ENCODE measurements at regions of chr17 and their contacts with region 1.

Region 1: GRCh38 chr17:42760652-42761581 is at the start of gene RAMP2:
- DNase-seq: no peak
- ATAC-seq: peak; percentile 47
- total RNA-seq, gene RAMP2: 41.3 TPM

Region 2: GRCh38 chr17:42577532-42578281 is 183.2 kb before region 1 on chr17 and contains the start of gene PSMC3IP:
- intact Hi-C with region 1: loop called (anchors 5 kb)
- DNase-seq: peak; percentile 97
- ATAC-seq: peak; percentile 95
- total RNA-seq, gene PSMC3IP: 3.4 TPM

Region 3: DNA sequence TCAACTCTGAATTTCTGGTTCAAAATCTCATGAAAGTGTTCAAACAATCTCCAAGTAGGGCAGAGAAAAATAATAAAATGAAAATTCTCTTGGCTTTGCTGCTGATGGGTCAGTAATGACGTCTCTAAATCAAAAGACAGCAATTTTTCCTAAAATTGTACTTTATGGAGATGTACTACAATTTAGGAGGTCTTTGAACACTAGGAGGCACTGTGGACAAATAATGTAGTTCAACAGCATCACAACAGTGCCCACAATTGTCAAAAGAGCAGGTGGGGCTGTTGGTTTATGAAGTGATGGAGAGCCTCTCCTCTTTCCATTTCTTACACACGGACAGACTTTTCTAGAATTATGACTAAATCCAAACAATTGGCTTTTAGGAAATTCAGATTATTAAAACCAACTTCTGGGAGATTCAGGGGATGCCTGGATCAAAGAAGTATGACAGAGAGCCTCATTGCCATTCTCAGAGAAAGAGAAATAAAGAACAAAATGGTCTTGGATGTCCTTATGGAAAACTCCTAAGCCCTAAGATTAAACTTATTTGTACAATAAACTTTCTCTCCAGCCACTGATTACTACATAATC is 39.8 kb before region 1 on chr17:
- intact Hi-C with region 1: loop called (anchors 1 kb)
- DNase-seq: no peak
- ATAC-seq: peak; percentile 56

Region 4: DNA sequence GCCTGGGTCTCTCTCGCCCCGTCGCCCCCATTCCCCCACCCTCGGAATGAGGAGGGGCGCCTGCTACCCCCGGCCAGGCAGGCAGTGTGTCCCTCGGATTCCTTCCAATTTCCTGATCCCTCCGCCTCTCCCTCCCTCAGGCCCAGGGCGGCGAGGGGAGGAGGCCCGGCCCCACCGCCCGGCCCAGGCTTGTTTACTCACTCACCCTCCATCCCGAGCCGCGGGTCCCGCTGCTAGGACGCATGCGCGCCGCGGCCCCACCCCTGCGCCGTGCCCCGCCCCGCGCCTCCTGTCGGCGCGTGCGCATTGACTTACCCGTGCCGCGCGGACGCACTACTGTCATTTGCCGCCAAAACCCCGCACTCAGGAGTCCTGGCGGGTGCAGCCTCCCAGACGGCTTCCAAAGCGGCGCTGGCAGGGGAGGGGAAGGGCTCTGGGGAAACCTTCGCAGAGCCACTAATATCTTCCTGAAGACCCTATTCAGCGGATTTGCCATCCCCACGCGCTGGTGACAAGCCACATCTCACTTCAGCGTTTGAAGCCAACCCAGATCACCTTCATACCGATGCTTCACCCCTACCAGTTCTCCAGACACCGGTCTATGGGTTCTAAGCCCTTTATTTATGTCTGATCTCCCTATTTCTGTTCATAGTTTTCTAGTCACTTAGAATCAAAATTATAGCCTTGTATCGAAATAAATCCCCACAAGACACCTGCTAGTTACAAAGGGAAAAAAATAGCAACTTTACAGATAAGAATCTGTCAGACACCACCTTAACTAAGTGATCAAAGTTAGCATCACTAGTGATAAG is 15.9 kb before region 1 on chr17 and contains the start of gene EZH1:
- intact Hi-C with region 1: loop called (anchors 1 kb)
- DNase-seq: peak; percentile 95
- ATAC-seq: peak; percentile 97
- total RNA-seq, gene EZH1: 44.4 TPM

Measured in Right ventricle myocardium inferior (tissue), 1 donor.